H1 (cell line): ENCODE measurements at regions of chr12 and their contacts with region 1.

Region 1: GRCh38 chr12:5428332-5429221 is 3.3 kb upstream of the NTF3 start:
- DNase-seq: peak in 1 of 2 experiments; percentile 57
- H3K4me3 ChIP-seq: peak overlapping the region; percentile 26 to 74 (median 39); a peak in 6 of 8 replicates
- H3K27ac ChIP-seq: no peak overlapping the region
- H3K4me1 ChIP-seq: peaks cover 5 to 24% (median 11%) of the 10 kb centered on the region in 4 experiments
- H3K27me3 ChIP-seq: peaks cover 20 to 44% (median 31%) of the 10 kb centered on the region in 4 experiments; a peak in 6 of 7 replicates
- CTCF ChIP-seq: peak; percentile 61 to 69 (median 63)
- EP300 ChIP-seq: no peak
- POLR2A ChIP-seq: no peak
- RAD21 ChIP-seq: peak; percentile 87 to 90

Region 2: DNA sequence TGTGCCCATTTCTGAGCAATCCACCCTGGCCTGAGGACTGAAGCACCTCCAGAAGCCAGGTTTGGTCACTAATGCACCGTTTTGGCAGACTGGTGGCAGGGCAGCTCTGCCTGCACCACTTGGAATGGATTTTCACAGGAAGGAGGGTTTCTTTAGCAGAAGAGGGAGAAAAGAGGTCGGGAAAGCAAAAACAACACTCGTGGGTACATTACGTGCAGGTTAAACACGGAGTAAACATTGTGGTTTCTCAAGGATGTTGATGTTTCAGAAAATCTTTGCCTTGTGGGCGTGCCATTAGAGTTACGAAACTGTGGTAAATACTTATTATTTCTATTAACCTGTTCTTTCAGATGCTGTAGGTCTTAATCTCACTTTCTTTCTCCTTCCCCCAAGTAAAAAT is 314.1 kb before region 1 on chr12:
- CTCF ChIA-PET with region 1: no interaction called
- POLR2A ChIA-PET with region 1: no interaction called
- DNase-seq: no peak
- H3K4me3 ChIP-seq: no peak overlapping the region
- H3K27ac ChIP-seq: no peak overlapping the region
- H3K4me1 ChIP-seq: no peaks in the 10 kb centered on the region
- H3K27me3 ChIP-seq: no peaks in the 10 kb centered on the region; a peak in 1 of 7 replicates
- CTCF ChIP-seq: no peak
- EP300 ChIP-seq: no peak
- POLR2A ChIP-seq: no peak
- RAD21 ChIP-seq: no peak

Region 3: DNA sequence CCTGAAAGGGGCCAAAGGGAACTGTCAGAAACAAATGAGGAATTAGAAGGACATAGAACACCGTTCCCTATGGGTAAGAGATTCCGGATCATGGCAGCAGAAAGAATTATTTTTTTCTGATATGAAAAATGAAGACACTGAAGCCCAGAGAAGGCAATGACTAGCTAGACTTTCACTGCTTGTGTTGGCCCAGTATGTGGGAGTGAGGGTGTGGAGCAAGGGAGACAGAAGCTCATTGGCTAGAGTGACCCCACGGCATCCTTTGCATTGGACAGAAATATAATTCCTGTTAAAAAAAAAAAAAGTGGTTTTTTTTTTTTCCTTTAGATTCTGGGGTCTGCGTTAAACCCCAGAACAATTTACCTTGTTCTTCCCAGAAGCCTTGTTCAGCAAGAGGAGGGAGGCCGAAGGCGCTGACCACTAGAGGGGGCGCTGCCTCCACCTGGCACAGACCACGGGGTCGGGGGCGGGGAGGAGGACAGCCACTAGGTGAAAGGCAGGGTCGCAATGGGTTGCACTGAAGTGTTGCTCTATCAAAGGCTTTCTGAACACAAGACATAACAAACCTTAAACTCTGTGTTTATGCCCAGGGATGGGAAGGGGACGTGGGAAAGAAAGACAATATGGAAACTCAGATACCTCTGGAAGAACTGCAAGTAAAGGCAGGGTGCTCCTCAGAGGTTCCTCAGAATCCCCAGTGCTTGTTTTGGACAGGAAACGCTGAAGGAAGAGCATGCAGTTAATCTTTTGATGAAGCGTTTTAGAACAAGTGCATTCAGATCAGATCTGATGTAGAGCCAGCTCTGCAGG is 228.1 kb before region 1 on chr12:
- CTCF ChIA-PET with region 1: interaction called, 112 read pairs
- POLR2A ChIA-PET with region 1: interaction called, 3 read pairs
- DNase-seq: peak; percentile 58 to 93
- H3K4me3 ChIP-seq: no peak overlapping the region
- H3K27ac ChIP-seq: no peak overlapping the region
- H3K4me1 ChIP-seq: peaks cover 3 to 22% (median 10%) of the 10 kb centered on the region in 4 experiments; a peak in 5 of 7 replicates
- H3K27me3 ChIP-seq: no peaks in the 10 kb centered on the region; a peak in 1 of 7 replicates
- CTCF ChIP-seq: peak; percentile 83 to 95 (median 89)
- EP300 ChIP-seq: no peak
- POLR2A ChIP-seq: no peak
- RAD21 ChIP-seq: peak; percentile 96

Region 4: GRCh38 chr12:5276327-5276880 is 152.2 kb before region 1 on chr12:
- CTCF ChIA-PET with region 1: no interaction called
- POLR2A ChIA-PET with region 1: no interaction called
- DNase-seq: no peak
- H3K4me3 ChIP-seq: no peak overlapping the region
- H3K27ac ChIP-seq: no peak overlapping the region
- H3K4me1 ChIP-seq: no peaks in the 10 kb centered on the region
- H3K27me3 ChIP-seq: no peaks in the 10 kb centered on the region
- CTCF ChIP-seq: no peak
- EP300 ChIP-seq: no peak
- POLR2A ChIP-seq: no peak
- RAD21 ChIP-seq: no peak; a peak in 1 of 4 replicates

Region 5: GRCh38 chr12:5318874-5319273 is 109.7 kb before region 1 on chr12:
- CTCF ChIA-PET with region 1: no interaction called
- POLR2A ChIA-PET with region 1: no interaction called
- DNase-seq: no peak
- H3K4me3 ChIP-seq: no peak overlapping the region
- H3K27ac ChIP-seq: no peak overlapping the region
- H3K4me1 ChIP-seq: no peaks in the 10 kb centered on the region
- H3K27me3 ChIP-seq: peaks cover 0 to 1% (median 0%) of the 10 kb centered on the region in 4 experiments; a peak in 2 of 7 replicates
- CTCF ChIP-seq: no peak
- EP300 ChIP-seq: no peak
- POLR2A ChIP-seq: no peak
- RAD21 ChIP-seq: no peak

Region 6: DNA sequence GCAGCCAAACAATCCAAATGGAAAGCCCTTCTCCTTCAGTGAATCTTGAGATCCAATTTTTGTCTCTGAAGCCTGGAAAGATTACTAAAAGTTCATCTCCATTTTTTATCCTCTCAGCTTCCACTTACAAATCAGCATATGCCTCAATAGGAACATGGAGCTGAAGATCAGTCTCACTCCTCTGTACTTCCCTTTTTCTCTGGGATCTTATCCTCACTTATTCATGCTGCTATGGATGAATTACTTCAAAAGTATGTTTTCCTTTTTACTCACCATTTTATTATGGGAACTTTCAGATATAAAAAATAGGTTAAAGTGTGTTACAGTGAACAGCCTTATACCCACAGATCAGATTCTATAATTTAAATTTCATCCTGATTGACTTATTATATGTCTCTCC is 11.1 kb before region 1 on chr12:
- CTCF ChIA-PET with region 1: interaction called, 12 read pairs
- POLR2A ChIA-PET with region 1: no interaction called
- DNase-seq: no peak
- H3K4me3 ChIP-seq: no peak overlapping the region
- H3K27ac ChIP-seq: no peak overlapping the region
- H3K4me1 ChIP-seq: no peaks in the 10 kb centered on the region
- H3K27me3 ChIP-seq: no peaks in the 10 kb centered on the region
- CTCF ChIP-seq: no peak
- EP300 ChIP-seq: no peak
- POLR2A ChIP-seq: no peak
- RAD21 ChIP-seq: no peak

Region 7: GRCh38 chr12:5465384-5465783 is 36.8 kb after region 1 on chr12:
- CTCF ChIA-PET with region 1: interaction called, 16 read pairs
- POLR2A ChIA-PET with region 1: no interaction called
- DNase-seq: no peak
- H3K4me3 ChIP-seq: no peak overlapping the region
- H3K27ac ChIP-seq: no peak overlapping the region
- H3K4me1 ChIP-seq: peaks cover 0 to 3% (median 0%) of the 10 kb centered on the region in 4 experiments; a peak in 1 of 7 replicates
- H3K27me3 ChIP-seq: no peaks in the 10 kb centered on the region
- CTCF ChIP-seq: no peak
- EP300 ChIP-seq: no peak
- POLR2A ChIP-seq: no peak
- RAD21 ChIP-seq: no peak

Region 8: GRCh38 chr12:5556039-5556614 is 127.5 kb after region 1 on chr12:
- CTCF ChIA-PET with region 1: interaction called, 13 read pairs
- POLR2A ChIA-PET with region 1: no interaction called
- DNase-seq: peak in 1 of 2 experiments; percentile 88
- H3K4me3 ChIP-seq: no peak overlapping the region
- H3K27ac ChIP-seq: no peak overlapping the region
- H3K4me1 ChIP-seq: peaks cover 0 to 3% (median 0%) of the 10 kb centered on the region in 4 experiments; a peak in 2 of 7 replicates
- H3K27me3 ChIP-seq: no peaks in the 10 kb centered on the region
- CTCF ChIP-seq: peak; percentile 73 to 79 (median 76)
- EP300 ChIP-seq: no peak
- POLR2A ChIP-seq: no peak
- RAD21 ChIP-seq: peak; percentile 64 to 75

Region 9: DNA sequence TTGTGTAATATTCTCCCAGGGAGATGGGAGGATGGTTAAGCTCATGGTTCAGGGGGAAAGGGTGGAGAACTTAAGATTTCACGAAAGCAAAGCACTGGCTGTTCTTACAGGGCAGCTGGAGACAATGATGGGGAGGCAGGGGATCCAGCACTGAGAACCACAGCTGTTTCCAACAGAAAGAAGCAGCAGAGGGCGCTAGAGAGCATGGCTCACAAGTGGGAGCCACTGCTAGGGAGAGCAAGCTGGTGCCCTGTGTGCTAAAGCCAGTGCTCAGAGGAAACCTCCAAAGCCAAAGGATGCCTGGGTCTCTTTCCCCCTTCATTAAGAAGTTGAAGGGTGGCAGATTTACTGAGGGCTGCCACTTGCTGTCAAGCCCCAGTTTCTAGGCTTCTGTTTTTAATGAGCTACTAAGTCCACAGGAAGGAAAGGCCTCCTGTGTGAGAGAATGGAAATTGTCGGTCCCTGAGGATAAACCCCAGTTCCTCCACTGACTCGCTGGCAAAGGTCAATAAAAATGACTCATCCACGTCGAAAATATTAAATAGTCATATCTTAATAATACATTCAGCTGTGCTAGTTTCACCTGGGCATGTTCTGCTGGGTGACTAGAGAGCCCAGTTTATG is 316.8 kb after region 1 on chr12:
- CTCF ChIA-PET with region 1: interaction called, 17 read pairs
- POLR2A ChIA-PET with region 1: no interaction called
- DNase-seq: peak; percentile 70 to 92
- H3K4me3 ChIP-seq: no peak overlapping the region
- H3K27ac ChIP-seq: no peak overlapping the region
- H3K4me1 ChIP-seq: no peaks in the 10 kb centered on the region
- H3K27me3 ChIP-seq: no peaks in the 10 kb centered on the region
- CTCF ChIP-seq: peak; percentile 81 to 93 (median 90)
- EP300 ChIP-seq: no peak
- POLR2A ChIP-seq: no peak
- RAD21 ChIP-seq: peak; percentile 77 to 87